Naive thymus-derived CD4-positive, alpha-beta T cell (primary cell): ENCODE measurements at regions of chr2 and their contacts with region 1.

Region 1: DNA sequence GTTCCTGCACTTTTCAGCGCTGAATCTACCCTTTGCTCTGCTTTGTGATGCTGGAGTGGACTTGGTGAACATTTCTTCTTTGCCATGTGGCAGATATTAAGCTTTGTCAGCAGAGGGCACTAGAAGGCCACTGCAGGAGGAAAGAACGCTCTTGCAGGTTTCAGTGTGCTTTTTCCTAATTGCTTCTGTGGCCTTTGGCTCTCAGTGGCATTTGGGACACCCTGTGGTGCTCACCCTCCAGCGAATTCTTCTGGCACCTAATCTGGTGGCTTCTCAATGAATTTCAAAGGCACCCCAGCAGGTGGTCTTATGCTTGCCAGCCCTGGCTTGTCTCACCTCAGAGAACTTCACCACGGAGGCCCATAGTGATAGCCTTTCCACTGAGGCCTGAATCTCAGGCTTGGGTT is 146.7 kb downstream of the MYO3B start:
- DNase-seq: peak in 8 of 9 donors; percentile 5 to 57 (median 34)
- ATAC-seq: peak; percentile 31
- H3K4me3 ChIP-seq: no peak overlapping the region
- H3K4me3 Mint-ChIP-seq: no peak overlapping the region
- H3K27ac ChIP-seq: no peak overlapping the region
- H3K27ac Mint-ChIP-seq: no peak overlapping the region
- H3K4me1 ChIP-seq: no peaks in the 10 kb centered on the region
- H3K4me1 Mint-ChIP-seq: peaks cover 0 to 2% (median 0%) of the 10 kb centered on the region in 7 donors
- H3K27me3 ChIP-seq: no peaks in the 10 kb centered on the region
- H3K27me3 Mint-ChIP-seq: peaks cover 0 to 7% (median 3%) of the 10 kb centered on the region in 5 donors

Region 2: DNA sequence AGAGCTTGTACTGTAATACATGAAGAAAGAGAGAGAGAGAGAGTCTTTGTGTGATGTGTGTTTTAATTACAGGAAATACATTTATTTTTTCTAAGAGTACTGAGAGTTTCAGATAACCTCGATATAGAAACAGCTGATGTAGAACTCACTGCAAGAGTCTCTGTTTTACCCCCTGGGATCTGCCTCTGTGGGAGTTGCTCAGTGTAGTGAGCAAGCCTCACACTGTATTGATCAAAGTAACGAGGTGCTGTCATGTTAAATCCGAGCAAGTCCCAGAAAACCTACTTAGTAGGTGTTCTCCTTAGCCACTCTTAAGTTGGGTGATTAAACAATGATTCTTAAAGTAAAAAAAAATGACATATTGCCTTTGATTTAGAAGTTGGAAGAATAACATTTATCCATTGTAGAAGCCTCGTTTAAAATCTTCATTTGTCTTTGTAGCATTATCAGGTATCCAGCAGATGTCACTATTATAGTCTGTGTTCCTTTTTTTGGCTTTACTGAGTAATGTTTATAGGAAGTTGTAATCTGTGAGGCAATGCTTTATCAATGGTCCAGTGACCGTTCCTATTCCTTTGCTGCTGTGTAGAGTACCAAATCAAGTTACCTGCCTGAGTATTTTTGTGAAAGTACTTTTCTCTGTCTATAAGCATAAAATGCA is 72.3 kb after region 1 on chr2:
- CTCF ChIA-PET with region 1: no interaction called
- POLR2A ChIA-PET with region 1: no interaction called
- intact Hi-C with region 1: loop called in 1 of 2 experiments (anchors 2 kb)
- DNase-seq: peak in 2 of 9 donors; percentile 10 to 15
- ATAC-seq: no peak
- H3K4me3 ChIP-seq: no peak overlapping the region
- H3K4me3 Mint-ChIP-seq: no peak overlapping the region
- H3K27ac ChIP-seq: no peak overlapping the region
- H3K27ac Mint-ChIP-seq: no peak overlapping the region
- H3K4me1 ChIP-seq: no peaks in the 10 kb centered on the region
- H3K4me1 Mint-ChIP-seq: peaks cover 0 to 8% (median 0%) of the 10 kb centered on the region in 7 donors
- H3K27me3 ChIP-seq: no peaks in the 10 kb centered on the region
- H3K27me3 Mint-ChIP-seq: peaks cover 33 to 64% (median 43%) of the 10 kb centered on the region in 5 donors